Heart left ventricle (tissue), 16 donors: ENCODE measurements at regions of chrX and their contacts with region 1.

Region 1: GRCh38 chrX:153460845-153461244 is 9.5 kb downstream of the HAUS7 start:
- DNase-seq: peak in 4 of 5 donors; percentile 25 to 64 (median 40)
- ATAC-seq: peak in 1 of 4 donors; percentile 45
- H3K4me3 ChIP-seq: no peak overlapping the region
- H3K27ac ChIP-seq: no peak overlapping the region
- H3K4me1 ChIP-seq: peaks cover 0 to 6% (median 0%) of the 10 kb centered on the region in 12 donors
- H3K27me3 ChIP-seq: no peaks in the 10 kb centered on the region
- CTCF ChIP-seq: peak; percentile 32 to 62 (median 46)
- POLR2A ChIP-seq: no peak

Region 2: DNA sequence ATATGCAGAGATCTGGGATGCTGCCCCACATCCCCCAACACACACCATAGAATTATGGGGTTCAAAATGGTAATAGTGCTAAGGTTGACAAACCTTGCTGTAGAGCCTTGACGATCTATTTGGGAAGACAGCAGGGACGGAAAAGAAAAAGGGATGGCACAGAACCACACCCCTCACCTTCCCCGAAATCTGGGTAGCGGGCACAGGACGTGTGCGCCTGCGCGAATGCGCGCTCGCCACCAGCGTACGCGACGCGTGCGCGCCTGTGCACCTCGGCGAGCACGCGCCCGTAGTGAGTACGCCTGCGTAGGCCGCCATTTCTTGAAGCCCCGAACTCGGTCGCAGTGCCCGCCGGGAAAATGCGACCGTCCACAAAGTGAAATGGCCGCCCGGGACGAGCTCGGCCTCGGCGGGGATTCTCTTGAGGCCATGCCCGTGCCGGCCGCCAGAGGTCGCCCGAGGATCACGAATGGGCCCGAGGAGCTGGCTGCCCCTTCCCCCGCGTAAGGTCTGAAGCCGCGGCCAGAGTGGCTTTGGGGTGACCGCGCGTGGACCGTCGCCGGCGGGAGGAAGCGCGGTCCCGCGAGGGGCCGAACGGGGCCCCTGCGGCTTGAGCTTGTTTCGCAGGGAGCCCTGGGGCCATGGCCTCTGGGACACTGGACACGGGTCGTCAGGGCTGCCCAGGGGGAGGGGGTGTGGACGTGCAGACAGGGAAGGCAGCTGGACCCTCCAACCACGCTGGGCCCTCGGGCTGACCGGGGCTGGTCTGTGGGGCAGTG is 519.3 kb before region 1 on chrX:
- intact Hi-C with region 1: loop called in 1 of 10 experiments (anchors 10 kb)
- DNase-seq: peak; percentile 89 to 94 (median 93)
- ATAC-seq: peak; percentile 93 to 98 (median 94)
- H3K4me3 ChIP-seq: peak overlapping the region; percentile 16 to 71 (median 60)
- H3K27ac ChIP-seq: peak overlapping the region; percentile 5 to 86 (median 80)
- H3K4me1 ChIP-seq: peaks cover 0 to 12% (median 3%) of the 10 kb centered on the region in 12 donors
- H3K27me3 ChIP-seq: peaks cover 0 to 7% (median 0%) of the 10 kb centered on the region in 9 donors
- CTCF ChIP-seq: peak; percentile 63 to 87 (median 80)
- POLR2A ChIP-seq: peak in 1 of 2 donors; percentile 51

Region 3: DNA sequence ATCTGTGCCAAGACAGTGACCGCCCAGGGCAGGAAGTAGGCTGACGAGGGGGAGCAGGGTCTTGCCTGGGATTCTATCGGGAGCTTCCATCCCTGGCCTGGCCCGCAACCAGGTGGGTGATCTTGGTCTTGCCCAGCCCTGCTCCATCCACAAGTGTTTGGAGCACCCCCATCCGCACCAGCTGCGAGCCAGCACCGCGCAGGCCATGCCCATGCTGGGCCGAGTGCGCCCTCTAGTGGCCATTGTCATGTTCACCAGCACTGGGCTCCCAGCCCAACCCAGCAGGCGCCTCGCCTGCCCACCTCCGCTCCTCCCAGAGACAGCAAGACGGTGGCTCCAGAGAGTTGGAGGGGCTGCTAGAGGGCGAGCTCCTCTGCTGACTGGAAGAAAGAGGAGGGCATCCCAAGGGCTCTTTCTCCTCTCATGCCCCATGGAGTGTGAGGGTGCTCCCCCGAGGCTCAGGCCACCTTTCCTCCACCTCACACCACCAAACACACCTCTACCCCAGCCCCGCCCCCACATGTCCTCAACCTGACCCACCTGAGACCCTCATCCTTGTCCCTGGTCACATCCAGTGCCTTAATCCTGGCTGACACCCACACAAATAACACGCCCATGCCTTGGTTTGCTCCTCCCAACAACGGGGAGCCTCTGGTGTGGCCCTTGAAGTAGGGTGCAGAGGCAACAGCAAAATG is 46.8 kb after region 1 on chrX:
- intact Hi-C with region 1: loop called in 3 of 10 experiments (anchors 5 to 10 kb)
- DNase-seq: peak; percentile 75 to 88 (median 79)
- ATAC-seq: peak; percentile 61 to 93 (median 84)
- H3K4me3 ChIP-seq: no peak overlapping the region
- H3K27ac ChIP-seq: peak overlapping the region in 2 of 12 donors; percentile 22 to 24
- H3K4me1 ChIP-seq: peaks cover 0 to 7% (median 0%) of the 10 kb centered on the region in 12 donors
- H3K27me3 ChIP-seq: peaks cover 0 to 4% (median 0%) of the 10 kb centered on the region in 9 donors
- CTCF ChIP-seq: peak; percentile 72 to 93 (median 79)
- POLR2A ChIP-seq: no peak